Activated CD4-positive, alpha-beta memory T cell treated with anti-CD3 and anti-CD28 coated beads for 36 hours (primary cell): ENCODE measurements at regions of chr12 and their contacts with region 1.

Region 1: DNA sequence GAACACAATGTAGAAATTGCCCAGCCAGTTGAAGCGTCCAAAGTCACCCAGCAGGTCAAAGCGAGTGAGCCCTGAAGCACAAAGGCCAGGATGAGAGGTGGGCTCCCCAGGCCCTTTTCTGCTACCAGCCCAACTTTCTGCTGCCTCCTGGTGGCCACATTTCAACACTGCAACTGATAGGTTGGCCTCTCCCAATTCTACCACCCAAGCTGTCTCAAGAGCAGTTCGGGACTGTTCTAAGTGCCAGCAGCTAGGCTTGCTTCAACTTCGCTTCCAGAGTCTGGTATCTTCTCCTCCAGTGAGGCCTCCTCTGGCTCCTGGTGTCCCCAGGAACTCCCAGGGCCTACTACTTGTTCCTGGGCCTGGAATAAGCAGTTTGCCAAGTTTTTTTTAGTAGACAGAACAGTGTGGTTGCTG is 3.4 kb upstream of the DHH start:
- DNase-seq: peak; percentile 73
- H3K4me3 Mint-ChIP-seq: no peak overlapping the region
- H3K27ac Mint-ChIP-seq: no peak overlapping the region
- H3K4me1 Mint-ChIP-seq: peaks cover 12% of the 10 kb centered on the region
- H3K27me3 Mint-ChIP-seq: peaks cover 20% of the 10 kb centered on the region

Region 2: DNA sequence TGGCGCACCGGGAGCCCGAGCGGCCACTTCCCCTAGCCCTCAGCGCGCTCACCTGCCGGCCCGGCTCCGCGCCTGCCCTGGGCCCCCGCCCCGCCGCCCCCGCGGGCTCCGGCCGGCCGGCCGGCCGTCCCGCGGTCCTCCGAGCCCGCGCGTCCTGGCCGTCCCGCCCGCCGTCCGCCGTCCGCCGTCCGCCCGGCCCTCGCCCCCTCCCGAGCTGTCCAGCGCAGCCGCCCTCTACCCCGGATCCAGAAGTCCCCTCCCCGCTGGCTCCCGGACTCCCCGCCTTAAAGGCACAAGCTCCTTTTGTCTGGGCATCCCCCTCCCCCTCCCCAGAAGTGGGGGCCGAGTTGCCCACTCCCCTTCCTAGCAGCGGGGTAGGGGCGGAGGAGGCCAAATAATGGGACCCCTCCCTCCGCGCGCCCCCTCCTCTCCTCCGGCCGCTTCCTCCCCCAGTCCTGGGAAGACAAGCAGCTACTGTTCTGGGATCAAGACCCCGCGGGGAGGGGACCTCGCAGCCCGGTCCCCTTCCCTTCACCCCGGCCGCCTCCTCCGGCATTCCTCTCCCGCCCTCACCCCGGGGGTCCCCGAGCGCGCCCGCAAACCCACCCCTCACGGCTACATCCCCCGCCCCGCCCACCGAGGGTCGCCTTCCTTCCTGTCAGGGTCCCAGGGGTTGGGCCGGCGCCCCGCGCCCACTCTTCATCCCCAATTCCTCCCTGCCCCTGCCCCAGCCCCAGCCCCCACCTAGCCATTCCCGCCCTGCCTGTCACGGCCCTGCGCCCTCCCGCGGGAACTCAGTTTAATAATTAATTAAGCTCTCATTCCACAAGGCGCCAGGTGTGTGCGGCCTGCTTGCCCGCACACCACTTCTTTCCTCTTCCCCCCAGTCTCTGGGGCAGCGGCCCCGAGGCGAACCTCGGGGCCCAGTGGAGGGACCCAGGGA is 308.9 kb before region 1 on chr12 and contains the start of gene ADCY6:
- CTCF ChIA-PET with region 1: no interaction called
- POLR2A ChIA-PET with region 1: no interaction called
- intact Hi-C with region 1: no loop called
- DNase-seq: peak; percentile 24
- H3K4me3 Mint-ChIP-seq: peak within 1 kb of the TSS; percentile 67
- H3K27ac Mint-ChIP-seq: no peak within 1 kb of the TSS
- H3K4me1 Mint-ChIP-seq: no peaks in the 10 kb centered on the region
- H3K27me3 Mint-ChIP-seq: peaks cover 41% of the 10 kb centered on the region
- total RNA-seq, gene ADCY6: 0.15 to 0.21 TPM

Region 3: GRCh38 chr12:49069507-49070346 is 28.3 kb before region 1 on chr12 and contains the start of gene RHEBL1:
- CTCF ChIA-PET with region 1: interaction called, 256 read pairs
- POLR2A ChIA-PET with region 1: interaction called, 7 read pairs
- intact Hi-C with region 1: no loop called
- DNase-seq: peak; percentile 100
- H3K4me3 Mint-ChIP-seq: peak within 1 kb of the TSS; percentile 98
- H3K27ac Mint-ChIP-seq: peak within 1 kb of the TSS; percentile 90
- H3K4me1 Mint-ChIP-seq: peaks cover 12% of the 10 kb centered on the region
- H3K27me3 Mint-ChIP-seq: no peaks in the 10 kb centered on the region
- total RNA-seq, gene RHEBL1: 15.6 to 16.1 TPM

Region 4: GRCh38 chr12:49079793-49080192 is 18.2 kb before region 1 on chr12:
- CTCF ChIA-PET with region 1: interaction called, 184 read pairs
- POLR2A ChIA-PET with region 1: no interaction called
- intact Hi-C with region 1: no loop called
- DNase-seq: no peak
- H3K4me3 Mint-ChIP-seq: no peak overlapping the region
- H3K27ac Mint-ChIP-seq: no peak overlapping the region
- H3K4me1 Mint-ChIP-seq: no peaks in the 10 kb centered on the region
- H3K27me3 Mint-ChIP-seq: no peaks in the 10 kb centered on the region

Region 5: GRCh38 chr12:49110464-49111155 is 12.6 kb after region 1 on chr12 and contains the start of gene LMBR1L:
- CTCF ChIA-PET with region 1: interaction called, 48 read pairs
- POLR2A ChIA-PET with region 1: interaction called, 3 read pairs
- intact Hi-C with region 1: no loop called
- DNase-seq: peak; percentile 97
- H3K4me3 Mint-ChIP-seq: peak within 1 kb of the TSS; percentile 95
- H3K27ac Mint-ChIP-seq: peak within 1 kb of the TSS; percentile 80
- H3K4me1 Mint-ChIP-seq: peaks cover 24% of the 10 kb centered on the region
- H3K27me3 Mint-ChIP-seq: no peaks in the 10 kb centered on the region
- total RNA-seq, gene LMBR1L: 55.0 to 59.1 TPM

Region 6: DNA sequence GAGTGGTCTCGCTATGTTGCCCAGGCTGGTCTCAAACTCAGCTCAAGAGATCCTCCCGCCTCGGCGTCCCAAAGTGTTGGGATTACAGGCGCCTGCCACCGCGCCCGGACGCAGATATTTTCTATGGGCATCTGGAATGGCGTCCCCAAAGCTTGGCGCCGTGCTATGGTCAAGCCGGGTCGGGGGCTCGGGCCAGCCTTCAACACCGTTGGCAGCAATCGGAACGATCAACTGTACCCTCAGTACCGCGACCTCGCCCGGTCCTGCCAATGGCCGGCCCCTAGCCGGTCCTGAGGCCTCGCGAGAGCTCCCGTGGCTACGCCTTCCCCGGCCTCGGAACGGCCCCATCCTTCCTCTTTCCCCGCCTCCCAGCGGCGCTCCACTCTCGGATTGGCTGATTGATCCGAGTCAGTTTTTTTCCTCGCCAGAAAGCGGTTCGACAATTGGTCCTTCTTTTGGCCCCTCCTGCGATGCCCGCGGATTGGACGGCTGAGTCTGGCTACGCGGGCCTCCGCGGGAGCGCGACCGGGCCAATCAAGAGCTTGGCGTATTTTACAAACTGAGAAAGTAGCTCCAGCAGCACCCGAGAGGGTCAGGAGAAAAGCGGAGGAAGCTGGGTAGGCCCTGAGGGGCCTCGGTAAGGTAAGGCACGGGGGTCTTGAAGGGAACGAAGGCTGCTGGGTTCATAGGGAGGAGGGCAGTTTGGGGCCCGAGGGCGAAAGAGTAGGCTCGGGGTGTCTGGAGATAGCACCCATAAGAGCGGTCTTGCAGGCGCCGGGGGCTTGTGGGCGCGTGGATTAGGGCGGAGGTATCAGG is 224.9 kb after region 1 on chr12 and contains the start of gene TROAP:
- CTCF ChIA-PET with region 1: no interaction called
- POLR2A ChIA-PET with region 1: no interaction called
- intact Hi-C with region 1: no loop called
- DNase-seq: peak; percentile 99
- H3K4me3 Mint-ChIP-seq: peak within 1 kb of the TSS; percentile 99
- H3K27ac Mint-ChIP-seq: peak within 1 kb of the TSS; percentile 90
- H3K4me1 Mint-ChIP-seq: peaks cover 19% of the 10 kb centered on the region
- H3K27me3 Mint-ChIP-seq: no peaks in the 10 kb centered on the region
- total RNA-seq, gene TROAP: 57.7 to 64.9 TPM

Region 7: DNA sequence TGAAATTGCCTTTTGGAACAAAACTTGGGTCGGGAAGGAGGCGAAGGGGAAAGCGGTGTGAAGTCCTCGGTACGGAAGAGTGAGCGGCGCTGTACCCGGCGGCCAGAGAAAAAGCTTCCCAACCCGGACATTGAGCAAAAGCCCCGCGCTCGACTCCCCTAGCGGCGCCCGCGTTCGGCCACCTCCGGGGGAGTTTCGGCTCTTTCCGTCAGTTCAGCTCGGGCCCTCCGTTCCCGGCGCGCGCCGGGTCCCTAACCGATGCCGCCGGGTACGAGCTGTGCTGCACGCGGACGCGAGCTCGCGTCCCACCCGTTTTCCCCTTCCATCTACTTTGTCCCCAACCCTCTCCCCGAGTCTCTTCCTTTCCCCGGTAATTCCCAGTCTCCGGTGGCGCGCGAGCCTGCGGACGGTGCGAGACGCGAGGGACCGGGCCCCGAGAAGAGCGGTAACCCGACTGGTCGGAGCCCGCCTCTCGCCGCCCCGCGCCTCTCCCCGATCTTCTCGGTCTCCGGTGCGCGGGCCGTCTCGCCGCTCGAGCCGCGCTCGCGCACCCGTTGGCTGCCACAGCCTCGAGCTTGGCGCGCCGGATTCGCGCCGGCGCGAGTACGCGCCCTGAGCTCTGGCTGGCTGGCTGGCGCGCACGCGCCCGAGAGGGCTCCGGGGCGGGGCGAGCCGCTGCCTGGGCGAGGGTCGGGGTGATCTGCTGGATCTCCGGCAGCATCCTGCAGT is 268.8 kb after region 1 on chr12:
- CTCF ChIA-PET with region 1: no interaction called
- POLR2A ChIA-PET with region 1: no interaction called
- intact Hi-C with region 1: no loop called
- DNase-seq: peak; percentile 93
- H3K4me3 Mint-ChIP-seq: peak overlapping the region; percentile 95
- H3K27ac Mint-ChIP-seq: peak overlapping the region; percentile 95
- H3K4me1 Mint-ChIP-seq: peaks cover 23% of the 10 kb centered on the region
- H3K27me3 Mint-ChIP-seq: no peaks in the 10 kb centered on the region